Right ventricle myocardium superior (tissue), 1 donor: ENCODE measurements at regions of chr10 and their contacts with region 1.

Region 1: DNA sequence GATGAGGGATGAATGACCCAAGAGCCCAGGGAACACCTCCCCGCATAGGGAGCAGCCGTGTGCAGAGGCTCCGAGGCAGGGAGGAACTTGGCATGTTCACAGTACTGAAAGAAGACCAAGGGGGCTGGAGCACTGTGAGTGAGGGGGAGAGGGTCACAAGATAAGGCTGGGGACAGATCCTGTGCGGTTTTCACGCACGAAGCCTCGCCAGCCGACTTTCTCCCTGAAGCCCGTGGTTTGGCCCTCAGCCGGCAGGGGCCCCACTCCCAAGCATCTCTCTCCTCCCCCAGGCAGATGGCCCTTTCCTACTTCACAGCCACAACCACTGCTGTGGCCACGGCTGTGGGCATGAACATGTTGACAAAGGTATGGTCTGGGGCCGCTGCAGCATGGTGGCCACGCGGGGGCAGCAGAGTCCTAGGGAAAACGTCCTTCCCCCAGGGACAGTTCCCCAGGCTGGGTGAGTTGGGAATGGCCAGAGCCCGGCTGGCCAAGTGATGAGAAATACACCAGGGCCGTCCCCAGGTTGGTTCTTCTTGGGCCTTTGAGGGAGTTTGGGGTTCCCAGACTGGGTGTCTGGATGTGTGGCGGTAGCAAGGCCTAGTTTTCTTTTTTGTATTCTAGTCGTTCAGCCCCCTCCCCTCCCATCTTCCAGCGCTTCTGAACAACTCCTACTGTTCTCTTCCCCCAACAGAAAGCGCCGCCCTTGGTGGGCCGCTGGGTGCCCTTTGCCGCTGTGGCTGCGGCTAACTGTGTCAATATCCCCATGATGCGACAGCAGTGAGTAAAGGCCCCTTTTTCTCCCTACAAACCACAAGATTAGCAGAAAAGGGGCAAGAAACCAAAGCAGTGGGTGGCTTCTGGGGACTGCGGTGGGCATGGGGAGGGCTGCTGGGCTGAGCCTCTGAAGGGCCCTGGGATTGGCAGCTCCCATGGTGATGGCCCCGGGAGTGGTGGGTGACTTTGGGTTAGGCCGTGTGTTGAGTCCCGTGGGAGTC is 14.4 kb upstream of the WBP1L start:
- DNase-seq: peak; percentile 93
- ATAC-seq: peak; percentile 96

Region 2: GRCh38 chr10:102641880-102642735 is 87.2 kb before region 1 on chr10:
- intact Hi-C with region 1: no loop called
- DNase-seq: peak; percentile 99
- ATAC-seq: peak; percentile 70

Region 3: GRCh38 chr10:102904346-102904745 is 175.0 kb after region 1 on chr10:
- intact Hi-C with region 1: loop called (anchors 5 kb)
- DNase-seq: no peak
- ATAC-seq: no peak

Region 4: GRCh38 chr10:103069453-103070331 is 340.4 kb after region 1 on chr10:
- intact Hi-C with region 1: loop called (anchors 5 kb)
- DNase-seq: peak; percentile 68
- ATAC-seq: peak; percentile 84